ENCODE measurements at regions of chr11 and their contacts with region 1.

Region 1: GRCh38 chr11:101436511-101437142 is 147.2 kb downstream of the TRPC6 start:
- DNase-seq: peak; percentile 79 to 80
- H3K4me3 ChIP-seq: no peak overlapping the region
- H3K4me3 Mint-ChIP-seq: no peak overlapping the region
- H3K27ac Mint-ChIP-seq: no peak overlapping the region
- H3K4me1 ChIP-seq: no peaks in the 10 kb centered on the region
- H3K4me1 Mint-ChIP-seq: no peaks in the 10 kb centered on the region
- H3K27me3 ChIP-seq: no peaks in the 10 kb centered on the region
- H3K27me3 Mint-ChIP-seq: no peaks in the 10 kb centered on the region
- CTCF ChIP-seq: peak; percentile 89 to 96

Region 2: GRCh38 chr11:101390539-101390938 is 46.1 kb before region 1 on chr11:
- CTCF ChIA-PET with region 1: interaction called, 3 read pairs
- POLR2A ChIA-PET with region 1: no interaction called
- intact Hi-C with region 1: loop called (anchors 1 kb)
- DNase-seq: no peak
- H3K4me3 ChIP-seq: no peak overlapping the region
- H3K4me3 Mint-ChIP-seq: no peak overlapping the region
- H3K27ac Mint-ChIP-seq: no peak overlapping the region
- H3K4me1 ChIP-seq: no peaks in the 10 kb centered on the region
- H3K4me1 Mint-ChIP-seq: no peaks in the 10 kb centered on the region
- H3K27me3 ChIP-seq: no peaks in the 10 kb centered on the region
- H3K27me3 Mint-ChIP-seq: no peaks in the 10 kb centered on the region
- CTCF ChIP-seq: peak; percentile 36 to 37

Measured in Caco-2 (cell line).